CD4-positive, alpha-beta T cell (primary cell): ENCODE measurements at regions of chr1 and their contacts with region 1.

Region 1: GRCh38 chr1:204249761-204250685 is 36.2 kb upstream of the GOLT1A start:
- DNase-seq: no peak
- ATAC-seq: no peak
- H3K4me3 ChIP-seq: no peak overlapping the region
- H3K4me3 Mint-ChIP-seq: no peak overlapping the region
- H3K27ac ChIP-seq: no peak overlapping the region
- H3K27ac Mint-ChIP-seq: no peak overlapping the region
- H3K4me1 ChIP-seq: no peaks in the 10 kb centered on the region
- H3K4me1 Mint-ChIP-seq: no peaks in the 10 kb centered on the region
- H3K27me3 ChIP-seq: no peaks in the 10 kb centered on the region
- H3K27me3 Mint-ChIP-seq: no peaks in the 10 kb centered on the region
- CTCF ChIP-seq: no peak

Region 2: GRCh38 chr1:203206129-203206687 is 1043.8 kb before region 1 on chr1:
- CTCF ChIA-PET with region 1: no interaction called
- POLR2A ChIA-PET with region 1: no interaction called
- intact Hi-C with region 1: loop called in 1 of 2 experiments (anchors 5 kb)
- DNase-seq: no peak
- ATAC-seq: no peak
- H3K4me3 ChIP-seq: no peak overlapping the region
- H3K4me3 Mint-ChIP-seq: no peak overlapping the region
- H3K27ac ChIP-seq: no peak overlapping the region
- H3K27ac Mint-ChIP-seq: no peak overlapping the region
- H3K4me1 ChIP-seq: no peaks in the 10 kb centered on the region
- H3K4me1 Mint-ChIP-seq: no peaks in the 10 kb centered on the region
- H3K27me3 ChIP-seq: no peaks in the 10 kb centered on the region
- H3K27me3 Mint-ChIP-seq: no peaks in the 10 kb centered on the region
- CTCF ChIP-seq: no peak